BJ (cell line): ENCODE measurements at regions of chr17 and their contacts with region 1.

Region 1: DNA sequence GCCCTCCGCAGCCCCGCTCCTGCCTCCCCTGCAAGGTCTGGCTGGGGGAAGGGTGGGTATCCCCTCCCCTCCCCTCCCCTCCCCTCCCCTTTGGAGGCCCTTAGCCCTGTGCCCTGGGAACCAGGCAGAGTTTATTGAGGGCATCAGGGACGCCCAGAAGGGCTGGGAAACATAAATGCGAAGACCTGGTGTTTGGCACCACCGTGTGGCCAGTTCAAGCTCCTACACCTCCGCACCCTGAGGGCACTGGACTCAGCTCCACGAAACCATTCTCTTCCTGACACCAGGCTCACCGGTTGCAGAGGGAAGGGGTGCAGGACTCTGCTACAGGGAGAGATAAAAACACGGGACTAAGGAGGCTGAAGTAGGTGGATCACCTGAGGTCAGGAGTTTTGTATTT is 1.0 kb upstream of the AIPL1 start:
- DNase-seq: no peak
- H3K4me3 ChIP-seq: no peak overlapping the region
- H3K27me3 ChIP-seq: peaks cover 4% of the 10 kb centered on the region
- CTCF ChIP-seq: peak; percentile 82

Region 2: DNA sequence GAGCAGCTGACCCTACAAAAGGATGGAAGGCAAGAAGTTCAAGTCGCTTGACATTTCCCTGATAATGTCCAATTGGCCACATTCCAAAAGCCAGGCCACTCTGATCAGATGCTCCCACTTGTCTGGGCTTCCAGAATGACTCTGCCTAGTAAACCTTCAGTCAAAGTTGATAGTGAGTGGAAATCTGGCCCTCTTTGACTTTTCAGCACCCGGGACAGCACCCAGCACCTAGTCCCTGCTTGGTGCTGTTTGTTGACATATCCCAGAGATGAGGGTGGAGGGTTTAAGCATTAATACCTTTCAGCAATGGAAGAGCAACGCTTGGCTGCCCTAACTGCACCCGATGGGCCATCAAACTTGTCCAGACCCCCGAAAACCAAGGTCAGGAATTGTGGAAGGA is 132.3 kb before region 1 on chr17:
- CTCF ChIA-PET with region 1: no interaction called
- POLR2A ChIA-PET with region 1: no interaction called
- DNase-seq: no peak
- H3K4me3 ChIP-seq: no peak overlapping the region
- H3K27me3 ChIP-seq: no peaks in the 10 kb centered on the region
- CTCF ChIP-seq: no peak

Region 3: DNA sequence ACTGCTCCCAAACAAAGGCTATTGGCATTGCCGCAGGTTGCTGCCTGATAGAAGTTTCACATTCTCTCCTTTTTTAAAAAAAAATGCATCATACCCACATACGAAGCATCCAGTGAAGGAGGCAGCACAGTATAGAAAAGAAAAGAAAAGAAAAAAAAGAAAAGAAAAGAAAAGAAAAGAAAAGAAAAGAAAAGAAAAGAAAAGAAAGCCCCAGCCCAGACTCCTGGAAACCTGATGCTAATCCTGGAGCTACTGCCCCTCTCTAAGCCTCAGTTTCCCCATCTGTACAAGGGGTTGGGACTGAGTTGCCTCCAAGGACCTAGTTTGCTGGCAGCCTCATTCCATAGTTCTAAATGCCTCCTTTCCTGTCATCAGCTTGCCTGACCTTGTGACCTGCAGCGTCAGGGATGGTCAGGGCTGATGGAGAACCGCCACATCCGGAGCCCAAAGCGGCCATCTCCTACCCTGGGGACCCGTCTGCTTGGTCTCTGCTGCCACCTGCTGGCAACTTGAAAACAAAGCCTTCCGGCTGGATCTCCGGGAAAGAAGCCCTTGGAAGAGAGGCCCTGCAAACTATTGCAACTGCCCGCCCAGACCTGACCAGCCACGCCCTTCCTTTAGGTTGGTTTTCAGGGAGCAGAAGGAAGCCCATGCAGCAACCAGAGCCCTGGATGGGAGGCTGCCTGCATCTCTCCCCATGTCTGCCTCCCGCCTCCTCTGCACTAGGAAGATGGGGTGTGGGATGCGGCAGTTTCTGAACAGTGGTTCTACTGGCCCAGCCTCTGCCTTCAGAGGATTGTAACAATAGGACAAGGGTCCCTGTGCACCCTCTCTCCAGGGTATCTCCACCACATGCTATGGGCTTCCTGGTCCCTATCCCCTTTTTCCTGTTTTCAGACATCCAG is 14.0 kb before region 1 on chr17:
- CTCF ChIA-PET with region 1: interaction called, 40 read pairs
- POLR2A ChIA-PET with region 1: no interaction called
- DNase-seq: no peak
- H3K4me3 ChIP-seq: no peak overlapping the region
- H3K27me3 ChIP-seq: peaks cover 4% of the 10 kb centered on the region
- CTCF ChIP-seq: peak; percentile 86

Region 4: GRCh38 chr17:6454957-6455705 is 19.2 kb after region 1 on chr17:
- CTCF ChIA-PET with region 1: interaction called, 12 read pairs
- POLR2A ChIA-PET with region 1: no interaction called
- DNase-seq: no peak
- H3K4me3 ChIP-seq: peak overlapping the region; percentile 1; the same call in 1 of the 2 replicates
- H3K27me3 ChIP-seq: no peaks in the 10 kb centered on the region
- CTCF ChIP-seq: no peak

Region 5: GRCh38 chr17:6567529-6568183 is 131.7 kb after region 1 on chr17:
- CTCF ChIA-PET with region 1: no interaction called
- POLR2A ChIA-PET with region 1: no interaction called
- DNase-seq: no peak
- H3K4me3 ChIP-seq: no peak overlapping the region
- H3K27me3 ChIP-seq: no peaks in the 10 kb centered on the region
- CTCF ChIP-seq: no peak